ENCODE measurements at regions of chr2 and their contacts with region 1.

Region 1: DNA sequence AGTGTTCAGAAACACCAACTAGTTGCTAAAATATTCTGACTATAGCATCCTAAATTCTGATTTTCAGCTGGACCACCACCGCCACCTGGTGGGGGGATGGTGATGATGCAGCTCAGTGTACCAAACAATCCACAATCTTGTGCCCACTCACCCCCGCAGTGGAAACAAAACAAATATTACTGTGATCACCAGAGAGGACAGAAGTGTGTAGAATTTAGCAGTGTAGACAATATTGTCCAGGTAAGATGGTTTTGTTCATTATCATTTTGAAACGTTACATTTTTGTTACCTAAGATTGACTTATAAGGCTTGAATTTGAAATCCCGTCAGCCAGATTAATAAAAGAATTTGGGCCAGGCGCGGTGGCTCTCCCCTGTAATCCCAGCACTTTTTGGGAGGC is 31.7 kb upstream of the UBXN4 start:
- DNase-seq: peak; percentile 57 to 68 (median 60)
- H3K4me3 ChIP-seq: no peak overlapping the region
- H3K4me3 Mint-ChIP-seq: no peak overlapping the region
- H3K27ac ChIP-seq: no peak overlapping the region
- H3K27ac Mint-ChIP-seq: no peak overlapping the region
- H3K4me1 ChIP-seq: no peaks in the 10 kb centered on the region
- H3K4me1 Mint-ChIP-seq: peaks cover 0 to 3% (median under 1%) of the 10 kb centered on the region in 4 donors
- H3K27me3 ChIP-seq: no peaks in the 10 kb centered on the region
- H3K27me3 Mint-ChIP-seq: no peaks in the 10 kb centered on the region

Region 2: GRCh38 chr2:134988994-134989605 is 720.9 kb before region 1 on chr2:
- CTCF ChIA-PET with region 1: interaction called, 69 read pairs
- POLR2A ChIA-PET with region 1: no interaction called
- intact Hi-C with region 1: loop called (anchors 1 kb)
- DNase-seq: peak in 4 of 5 donors; percentile 11 to 22 (median 14)
- H3K4me3 ChIP-seq: no peak overlapping the region
- H3K4me3 Mint-ChIP-seq: no peak overlapping the region
- H3K27ac ChIP-seq: no peak overlapping the region
- H3K27ac Mint-ChIP-seq: no peak overlapping the region
- H3K4me1 ChIP-seq: no peaks in the 10 kb centered on the region
- H3K4me1 Mint-ChIP-seq: no peaks in the 10 kb centered on the region
- H3K27me3 ChIP-seq: peaks cover 4% of the 10 kb centered on the region
- H3K27me3 Mint-ChIP-seq: peaks cover 0 to 5% of the 10 kb centered on the region in 2 donors

Region 3: DNA sequence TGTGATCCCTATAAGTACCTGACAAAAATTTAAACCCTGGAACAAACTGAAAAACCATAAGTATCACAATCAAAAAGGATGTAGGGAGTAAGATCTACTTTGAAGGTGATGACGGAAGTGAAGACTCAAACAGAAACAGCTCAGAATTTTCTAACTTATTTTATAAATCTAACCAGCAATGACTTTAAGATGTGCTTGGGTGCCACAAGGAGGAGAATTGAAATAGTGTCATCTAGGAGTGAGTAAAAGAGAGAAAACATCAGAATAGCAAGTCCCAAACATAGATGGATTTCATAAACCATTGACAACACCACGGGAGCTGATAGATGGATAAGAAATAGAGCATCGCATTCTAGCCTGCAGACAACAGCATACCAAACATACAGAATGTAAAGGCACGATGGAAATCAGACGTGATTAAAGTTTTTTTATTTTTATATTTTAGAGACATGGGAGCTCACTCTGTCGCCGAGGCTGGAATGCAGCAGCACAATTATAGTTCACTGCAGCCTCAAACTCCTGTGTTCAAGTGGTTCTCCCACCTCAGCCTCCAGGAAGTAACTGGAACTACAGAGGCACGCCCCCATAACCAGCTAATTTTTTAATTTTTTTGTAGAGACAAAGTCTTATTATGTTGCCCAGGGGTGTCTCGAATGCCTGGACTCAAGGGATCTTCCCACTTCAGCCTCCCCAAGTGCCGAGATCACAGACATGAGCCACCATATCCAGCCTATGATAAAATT is 699.6 kb before region 1 on chr2:
- CTCF ChIA-PET with region 1: interaction called, 157 read pairs
- POLR2A ChIA-PET with region 1: no interaction called
- intact Hi-C with region 1: no loop called
- DNase-seq: no peak
- H3K4me3 ChIP-seq: no peak overlapping the region
- H3K4me3 Mint-ChIP-seq: no peak overlapping the region
- H3K27ac ChIP-seq: no peak overlapping the region
- H3K27ac Mint-ChIP-seq: no peak overlapping the region
- H3K4me1 ChIP-seq: no peaks in the 10 kb centered on the region
- H3K4me1 Mint-ChIP-seq: peaks cover 0 to 3% (median 0%) of the 10 kb centered on the region in 4 donors
- H3K27me3 ChIP-seq: no peaks in the 10 kb centered on the region
- H3K27me3 Mint-ChIP-seq: peaks cover 5 to 17% of the 10 kb centered on the region in 2 donors

Region 4: DNA sequence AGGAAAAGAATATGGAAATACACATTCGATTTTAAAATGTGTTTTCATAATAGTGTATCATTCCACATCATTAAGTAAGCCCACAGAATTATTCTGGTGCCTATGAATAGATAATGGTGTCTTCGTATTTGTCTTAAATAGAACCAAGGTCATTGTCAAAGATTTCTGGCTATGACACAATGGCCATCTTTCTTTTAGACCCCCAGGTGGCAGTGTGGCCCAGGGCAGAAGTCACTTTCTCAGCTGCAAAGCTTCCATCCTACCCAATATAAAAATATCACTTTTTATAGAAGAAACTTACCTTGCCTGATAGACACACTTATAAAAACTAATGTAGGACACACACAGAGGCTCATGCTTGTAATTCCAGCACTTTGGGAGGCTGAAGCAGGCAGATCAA is 236.4 kb before region 1 on chr2:
- CTCF ChIA-PET with region 1: interaction called, 44 read pairs
- POLR2A ChIA-PET with region 1: interaction called, 3 read pairs
- intact Hi-C with region 1: no loop called
- DNase-seq: peak in 4 of 5 donors; percentile 4 to 25 (median 10)
- H3K4me3 ChIP-seq: no peak overlapping the region
- H3K4me3 Mint-ChIP-seq: no peak overlapping the region
- H3K27ac ChIP-seq: no peak overlapping the region
- H3K27ac Mint-ChIP-seq: no peak overlapping the region
- H3K4me1 ChIP-seq: no peaks in the 10 kb centered on the region
- H3K4me1 Mint-ChIP-seq: no peaks in the 10 kb centered on the region
- H3K27me3 ChIP-seq: no peaks in the 10 kb centered on the region
- H3K27me3 Mint-ChIP-seq: no peaks in the 10 kb centered on the region

Region 5: DNA sequence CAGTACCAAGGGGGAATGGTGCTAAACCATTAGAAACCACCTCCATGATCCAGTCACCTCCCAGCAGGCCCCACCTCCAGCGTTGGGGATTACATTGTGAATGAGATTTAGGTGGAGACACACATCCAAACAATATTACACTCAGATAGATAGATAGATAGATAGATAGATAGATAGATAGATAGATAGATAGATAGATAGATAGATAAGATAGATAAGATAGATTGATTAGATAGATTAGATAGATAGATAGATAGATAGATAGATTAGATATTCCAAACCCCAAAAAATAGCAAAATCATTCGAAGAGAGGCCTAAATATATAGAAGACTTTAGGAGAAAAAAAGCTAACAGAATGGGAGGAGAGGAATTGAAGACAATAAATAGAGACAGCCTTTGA is 11.2 kb before region 1 on chr2:
- CTCF ChIA-PET with region 1: interaction called, 10 read pairs
- POLR2A ChIA-PET with region 1: no interaction called
- intact Hi-C with region 1: no loop called
- DNase-seq: no peak
- H3K4me3 ChIP-seq: no peak overlapping the region
- H3K4me3 Mint-ChIP-seq: no peak overlapping the region
- H3K27ac ChIP-seq: no peak overlapping the region
- H3K27ac Mint-ChIP-seq: peak overlapping the region in 1 of 7 donors; percentile 7
- H3K4me1 ChIP-seq: no peaks in the 10 kb centered on the region
- H3K4me1 Mint-ChIP-seq: no peaks in the 10 kb centered on the region
- H3K27me3 ChIP-seq: no peaks in the 10 kb centered on the region
- H3K27me3 Mint-ChIP-seq: no peaks in the 10 kb centered on the region

Region 6: GRCh38 chr2:136404176-136404575 is 694.2 kb after region 1 on chr2:
- CTCF ChIA-PET with region 1: no interaction called
- POLR2A ChIA-PET with region 1: no interaction called
- intact Hi-C with region 1: no loop called
- DNase-seq: no peak
- H3K4me3 ChIP-seq: no peak overlapping the region
- H3K4me3 Mint-ChIP-seq: no peak overlapping the region
- H3K27ac ChIP-seq: no peak overlapping the region
- H3K27ac Mint-ChIP-seq: no peak overlapping the region
- H3K4me1 ChIP-seq: no peaks in the 10 kb centered on the region
- H3K4me1 Mint-ChIP-seq: no peaks in the 10 kb centered on the region
- H3K27me3 ChIP-seq: peaks cover 11% of the 10 kb centered on the region
- H3K27me3 Mint-ChIP-seq: peaks cover 34 to 47% of the 10 kb centered on the region in 2 donors